ENCODE measurements at regions of chr15 and their contacts with region 1.

Region 1: GRCh38 chr15:73051811-73052678 is at the start of gene NEO1:
- DNase-seq: peak; percentile 87
- ATAC-seq: peak; percentile 80
- H3K4me3 Mint-ChIP-seq: peak within 1 kb of the TSS; percentile 74
- H3K27ac Mint-ChIP-seq: peak within 1 kb of the TSS; percentile 53
- H3K4me1 Mint-ChIP-seq: peaks cover 6% of the 10 kb centered on the region
- H3K27me3 Mint-ChIP-seq: peaks cover 16% of the 10 kb centered on the region
- total RNA-seq, gene NEO1: 6.6 to 8.0 TPM

Region 2: DNA sequence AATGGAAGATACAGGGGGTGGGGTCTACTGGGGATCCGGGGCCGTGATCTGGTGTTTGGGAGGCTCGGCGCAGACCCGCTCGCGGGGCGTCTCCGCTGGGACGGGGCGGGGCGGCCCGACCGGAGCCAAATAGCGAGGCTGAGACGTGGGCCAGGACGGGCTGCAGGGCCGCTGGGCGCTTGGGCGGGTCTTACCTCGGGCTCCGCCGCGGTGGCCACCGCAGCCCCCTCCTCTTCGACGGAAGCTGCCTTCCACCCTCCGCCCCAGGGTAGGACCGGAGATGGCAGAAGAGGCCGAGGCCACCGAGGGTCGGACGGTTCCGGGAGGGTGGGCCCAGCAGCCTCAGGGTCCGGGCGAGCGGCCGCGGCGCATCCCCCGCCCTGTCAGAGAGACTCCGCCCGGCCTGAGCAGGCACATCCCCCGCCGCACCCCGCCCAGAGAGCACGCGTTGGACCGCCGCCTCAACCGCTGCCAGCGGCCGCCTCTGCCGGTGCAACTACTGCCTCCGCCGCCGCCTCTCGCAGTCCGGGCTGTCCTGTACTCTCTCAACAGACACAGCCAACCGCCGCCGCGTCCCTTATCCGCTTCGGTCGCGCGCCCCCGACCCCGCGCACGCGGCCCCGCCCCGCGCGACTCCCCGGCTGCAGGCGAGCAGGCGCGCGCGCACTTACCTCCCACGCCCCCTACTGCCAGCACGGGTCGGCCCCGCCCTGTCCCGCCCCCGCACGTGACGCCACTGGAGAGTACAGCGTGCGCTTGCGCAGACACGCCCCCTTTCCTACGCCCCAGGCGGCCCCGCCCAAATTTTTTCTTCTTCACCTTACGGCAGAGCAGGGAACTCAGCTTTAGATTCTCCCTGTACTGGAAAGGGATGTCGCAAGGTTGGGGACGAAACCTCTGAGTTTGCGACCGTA is 934.3 kb before region 1 on chr15 and contains the start of gene MYO9A:
- CTCF ChIA-PET with region 1: no interaction called
- POLR2A ChIA-PET with region 1: no interaction called
- intact Hi-C with region 1: loop called in 1 of 2 experiments (anchors 2 kb)
- DNase-seq: peak; percentile 100
- ATAC-seq: peak; percentile 73
- H3K4me3 Mint-ChIP-seq: peak within 1 kb of the TSS; percentile 98
- H3K27ac Mint-ChIP-seq: peak within 1 kb of the TSS; percentile 96
- H3K4me1 Mint-ChIP-seq: peaks cover 40% of the 10 kb centered on the region
- H3K27me3 Mint-ChIP-seq: no peaks in the 10 kb centered on the region
- total RNA-seq, gene MYO9A: 19.0 to 20.3 TPM

Region 3: GRCh38 chr15:72473614-72474465 is 578.2 kb before region 1 on chr15 and contains the start of gene ARIH1:
- CTCF ChIA-PET with region 1: no interaction called
- POLR2A ChIA-PET with region 1: no interaction called
- intact Hi-C with region 1: loop called in 1 of 2 experiments (anchors 10 kb)
- DNase-seq: peak; percentile 97
- ATAC-seq: peak; percentile 78
- H3K4me3 Mint-ChIP-seq: peak within 1 kb of the TSS; percentile 92
- H3K27ac Mint-ChIP-seq: peak within 1 kb of the TSS; percentile 92
- H3K4me1 Mint-ChIP-seq: peaks cover 36% of the 10 kb centered on the region
- H3K27me3 Mint-ChIP-seq: no peaks in the 10 kb centered on the region
- total RNA-seq, gene ARIH1: 177 to 195 TPM

Region 4: GRCh38 chr15:72796515-72797337 is 255.3 kb before region 1 on chr15:
- CTCF ChIA-PET with region 1: interaction called, 3 read pairs
- POLR2A ChIA-PET with region 1: no interaction called
- intact Hi-C with region 1: loop called in 1 of 2 experiments (anchors 1 kb)
- DNase-seq: peak; percentile 58
- ATAC-seq: peak; percentile 82
- H3K4me3 Mint-ChIP-seq: peak overlapping the region; percentile 67
- H3K27ac Mint-ChIP-seq: no peak overlapping the region
- H3K4me1 Mint-ChIP-seq: peaks cover 9% of the 10 kb centered on the region
- H3K27me3 Mint-ChIP-seq: peaks cover 24% of the 10 kb centered on the region

Region 5: GRCh38 chr15:73142802-73143762 is 91.0 kb after region 1 on chr15:
- CTCF ChIA-PET with region 1: no interaction called
- POLR2A ChIA-PET with region 1: no interaction called
- intact Hi-C with region 1: loop called in 1 of 2 experiments (anchors 5 kb)
- DNase-seq: peak; percentile 12
- ATAC-seq: peak; percentile 81
- H3K4me3 Mint-ChIP-seq: no peak overlapping the region
- H3K27ac Mint-ChIP-seq: peak overlapping the region; percentile 87
- H3K4me1 Mint-ChIP-seq: peaks cover 43% of the 10 kb centered on the region
- H3K27me3 Mint-ChIP-seq: no peaks in the 10 kb centered on the region

Measured in activated CD4-positive, alpha-beta T cell treated with anti-CD3 and anti-CD28 coated beads for 36 hours (primary cell).